ENCODE measurements at regions of chr17 and their contacts with region 1.

Region 1: DNA sequence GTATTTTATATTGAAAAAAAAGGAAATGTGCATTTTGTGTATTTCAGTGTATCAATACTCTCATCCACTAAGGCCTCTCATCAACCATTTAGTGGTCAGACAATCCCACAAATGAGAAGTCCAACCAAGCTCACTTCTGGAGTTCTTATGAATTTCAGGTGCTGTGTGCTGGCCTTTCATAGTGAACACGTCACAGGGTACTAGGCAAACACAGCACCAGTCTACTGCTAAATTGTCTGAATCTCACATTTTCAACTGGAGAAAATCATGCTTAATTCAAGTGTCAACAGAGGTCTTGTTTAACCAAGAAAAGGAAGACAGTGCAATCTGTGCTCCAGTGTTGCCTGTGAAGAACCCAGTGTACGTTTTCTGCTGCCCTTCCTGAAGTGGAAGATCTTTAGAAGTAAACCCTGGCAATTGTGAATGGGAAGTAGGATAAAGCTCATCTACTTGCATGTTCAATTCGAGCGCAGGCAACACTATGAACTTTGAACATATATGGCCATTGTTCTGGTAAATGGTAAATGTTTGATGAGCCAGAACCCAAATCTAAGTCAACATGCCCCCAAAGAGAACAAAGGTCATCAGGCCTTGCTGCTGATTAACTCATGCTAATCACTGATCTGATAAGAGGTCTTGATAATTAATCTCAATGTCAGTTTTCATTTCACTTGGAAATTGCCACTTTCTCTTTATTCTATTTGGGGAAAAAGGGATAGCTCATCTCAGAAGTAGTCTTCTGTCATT is 439.2 kb upstream of the SOX9 start:
- DNase-seq: peak; percentile 53 to 74
- H3K4me3 ChIP-seq: no peak overlapping the region
- H3K4me3 Mint-ChIP-seq: peak overlapping the region; percentile 21
- H3K27ac Mint-ChIP-seq: peak overlapping the region; percentile 42
- H3K4me1 ChIP-seq: peaks cover 30% of the 10 kb centered on the region
- H3K4me1 Mint-ChIP-seq: peaks cover 15% of the 10 kb centered on the region
- H3K27me3 ChIP-seq: no peaks in the 10 kb centered on the region
- H3K27me3 Mint-ChIP-seq: no peaks in the 10 kb centered on the region
- CTCF ChIP-seq: no peak

Region 2: GRCh38 chr17:71327376-71328059 is 354.1 kb before region 1 on chr17:
- CTCF ChIA-PET with region 1: no interaction called
- POLR2A ChIA-PET with region 1: no interaction called
- intact Hi-C with region 1: loop called (anchors 2 kb)
- DNase-seq: no peak
- H3K4me3 ChIP-seq: no peak overlapping the region
- H3K4me3 Mint-ChIP-seq: no peak overlapping the region
- H3K27ac Mint-ChIP-seq: no peak overlapping the region
- H3K4me1 ChIP-seq: peaks cover 8% of the 10 kb centered on the region
- H3K4me1 Mint-ChIP-seq: peaks cover 10% of the 10 kb centered on the region
- H3K27me3 ChIP-seq: no peaks in the 10 kb centered on the region
- H3K27me3 Mint-ChIP-seq: peaks cover 6% of the 10 kb centered on the region
- CTCF ChIP-seq: no peak